ENCODE measurements at regions of chr2 and their contacts with region 1.

Region 1: DNA sequence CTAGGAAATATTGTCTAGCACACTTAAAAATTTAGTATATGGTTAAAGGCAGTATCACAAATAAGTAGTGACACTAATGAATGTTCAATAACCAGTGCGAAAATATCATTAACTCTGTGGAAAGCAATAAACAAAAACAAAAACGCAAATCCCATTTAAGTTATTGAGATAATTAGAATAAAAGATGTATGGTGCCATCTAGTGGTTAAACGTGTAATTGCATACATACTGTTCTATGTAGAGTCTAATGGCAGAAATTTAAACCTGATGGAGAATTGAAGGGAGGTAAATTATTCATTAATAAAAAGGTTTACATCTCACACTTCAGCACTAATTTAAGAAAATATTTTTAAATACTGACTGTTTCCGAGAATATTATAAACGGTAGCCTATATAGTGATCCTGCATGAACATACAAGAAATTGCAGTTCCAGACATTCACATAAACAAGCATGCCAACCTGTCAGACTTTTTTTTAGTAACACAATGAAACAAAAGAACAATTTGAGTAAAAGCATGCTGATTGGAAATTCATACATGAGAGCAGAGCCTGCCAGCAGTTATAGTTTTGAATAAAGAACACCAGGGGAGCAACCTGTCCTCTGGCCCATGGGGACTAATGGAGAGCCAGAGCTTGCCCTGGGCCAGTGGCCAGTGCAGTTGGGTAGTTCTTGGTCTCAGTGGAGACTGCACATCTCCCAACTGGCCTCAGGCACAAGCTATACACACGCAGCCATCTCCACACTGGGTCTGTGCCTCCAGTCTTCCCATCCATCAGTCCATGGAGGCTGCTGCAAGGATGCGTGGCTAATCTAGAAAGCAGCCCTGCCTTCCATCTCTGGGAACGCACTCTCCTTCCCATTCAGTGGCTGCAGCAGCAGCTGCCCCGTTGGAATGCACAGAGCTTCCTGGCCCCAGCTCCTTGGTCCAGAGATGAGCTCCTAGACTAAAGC is 28.0 kb downstream of the GCG start:
- DNase-seq: no peak
- H3K4me3 ChIP-seq: no peak overlapping the region
- H3K27ac ChIP-seq: no peak overlapping the region
- H3K4me1 ChIP-seq: peaks cover 0 to 6% (median 2%) of the 10 kb centered on the region in 4 donors
- H3K27me3 ChIP-seq: no peaks in the 10 kb centered on the region
- CTCF ChIP-seq: peak; percentile 68 to 81 (median 75)
- EP300 ChIP-seq: no peak
- POLR2A ChIP-seq: no peak

Region 2: GRCh38 chr2:162007447-162008040 is 116.5 kb before region 1 on chr2:
- intact Hi-C with region 1: loop called (anchors 5 kb)
- DNase-seq: no peak
- H3K4me3 ChIP-seq: no peak overlapping the region
- H3K27ac ChIP-seq: no peak overlapping the region
- H3K4me1 ChIP-seq: no peaks in the 10 kb centered on the region
- H3K27me3 ChIP-seq: no peaks in the 10 kb centered on the region
- CTCF ChIP-seq: peak; percentile 31 to 73 (median 59)
- EP300 ChIP-seq: no peak
- POLR2A ChIP-seq: no peak

Measured in esophagus muscularis mucosa (tissue), 4 donors.